Left cardiac atrium (tissue), 4 donors: ENCODE measurements at regions of chr15 and their contacts with region 1.

Region 1: GRCh38 chr15:74768771-74769342 is 13.0 kb upstream of the CSK start:
- DNase-seq: peak; percentile 67
- ATAC-seq: peak; percentile 55

Region 2: GRCh38 chr15:74373731-74374647 is 394.9 kb before region 1 on chr15:
- intact Hi-C with region 1: loop called in 1 of 2 experiments (anchors 10 kb)
- DNase-seq: peak; percentile 95
- ATAC-seq: peak; percentile 99

Region 3: DNA sequence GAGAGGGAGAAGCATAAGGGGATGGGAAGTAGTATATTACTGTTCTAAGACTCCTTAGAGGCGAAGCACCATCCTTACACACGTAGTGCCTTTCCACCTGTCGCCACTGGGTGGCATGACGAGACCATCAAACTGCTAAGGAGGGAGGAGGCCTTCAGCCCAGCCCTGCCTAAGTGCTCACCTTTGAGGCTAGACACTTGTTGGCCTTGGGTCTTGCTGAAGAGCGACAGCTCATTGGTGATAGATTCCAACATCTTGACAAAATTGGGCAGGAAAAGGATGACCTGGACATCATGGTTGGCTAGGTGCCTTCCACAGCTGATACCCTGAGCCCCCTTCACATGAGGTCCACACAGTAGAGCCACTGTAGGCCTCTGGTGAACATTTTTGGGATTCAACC is 133.6 kb before region 1 on chr15:
- intact Hi-C with region 1: loop called (anchors 2 kb)
- DNase-seq: peak; percentile 64
- ATAC-seq: peak; percentile 72 to 74

Region 4: GRCh38 chr15:74799856-74800547 is 31.1 kb after region 1 on chr15:
- intact Hi-C with region 1: loop called in 1 of 2 experiments (anchors 1 kb)
- DNase-seq: peak; percentile 78
- ATAC-seq: peak; percentile 87 to 90

Region 5: GRCh38 chr15:74835307-74835823 is 66.5 kb after region 1 on chr15:
- intact Hi-C with region 1: loop called in 1 of 2 experiments (anchors 2 kb)
- DNase-seq: peak; percentile 63
- ATAC-seq: peak in 1 of 2 donors; percentile 10

Region 6: DNA sequence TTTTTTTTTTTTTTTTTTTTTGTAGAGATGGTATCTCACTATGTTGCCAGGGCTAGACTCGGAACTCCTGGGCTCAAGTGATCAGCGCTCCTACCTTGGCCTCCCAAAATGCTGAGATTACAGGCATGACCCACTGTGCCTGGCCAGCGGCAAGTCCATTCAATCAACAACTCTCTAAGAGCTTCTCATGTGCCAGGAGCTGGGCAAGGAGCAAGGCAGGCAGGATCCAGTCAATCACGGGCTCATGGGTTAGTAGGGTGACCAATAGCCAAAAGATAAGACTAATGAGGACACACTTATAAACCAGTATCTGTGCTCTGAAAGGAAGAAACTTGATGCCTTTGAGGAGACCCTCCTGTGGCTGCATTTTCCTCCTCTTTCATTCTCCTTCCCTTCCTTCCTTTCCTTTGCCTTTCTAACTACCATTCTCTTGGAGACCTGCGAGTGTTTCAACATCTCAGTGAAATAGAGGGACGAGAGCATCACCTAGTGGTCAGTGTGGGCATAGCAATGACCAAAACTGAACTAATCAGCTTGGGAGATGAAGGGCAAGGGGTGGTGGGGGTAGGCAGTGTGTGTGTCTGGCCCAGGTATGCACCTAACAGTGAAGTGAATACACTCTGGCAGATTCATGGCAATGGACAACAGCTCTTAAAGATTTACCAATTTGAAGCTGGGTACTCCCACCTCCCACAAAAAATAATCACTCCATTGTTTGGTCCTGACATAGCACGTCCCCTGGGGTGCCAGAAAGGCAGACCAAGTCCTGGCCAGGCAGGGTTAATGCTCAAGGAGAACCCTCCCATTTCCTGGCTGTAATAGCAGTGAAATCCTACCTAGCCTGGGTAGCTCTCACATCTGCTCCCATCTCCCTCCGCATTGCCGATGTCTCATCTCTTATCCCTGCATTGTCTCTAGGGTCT is 181.5 kb after region 1 on chr15:
- intact Hi-C with region 1: loop called (anchors 2 to 5 kb)
- DNase-seq: peak; percentile 70
- ATAC-seq: peak; percentile 48 to 60